ENCODE measurements at regions of chr12 and their contacts with region 1.

Region 1: GRCh38 chr12:59403259-59403932 is 192.4 kb upstream of the SLC16A7 start:
- DNase-seq: peak; percentile 30
- H3K4me3 Mint-ChIP-seq: no peak overlapping the region
- H3K27ac Mint-ChIP-seq: no peak overlapping the region
- H3K4me1 Mint-ChIP-seq: peaks cover 10% of the 10 kb centered on the region
- H3K27me3 Mint-ChIP-seq: peaks cover 2% of the 10 kb centered on the region

Region 2: GRCh38 chr12:59298296-59298695 is 105.1 kb before region 1 on chr12:
- CTCF ChIA-PET with region 1: no interaction called
- POLR2A ChIA-PET with region 1: no interaction called
- intact Hi-C with region 1: no loop called
- DNase-seq: no peak
- H3K4me3 Mint-ChIP-seq: no peak overlapping the region
- H3K27ac Mint-ChIP-seq: no peak overlapping the region
- H3K4me1 Mint-ChIP-seq: no peaks in the 10 kb centered on the region
- H3K27me3 Mint-ChIP-seq: peaks cover 4% of the 10 kb centered on the region

Region 3: DNA sequence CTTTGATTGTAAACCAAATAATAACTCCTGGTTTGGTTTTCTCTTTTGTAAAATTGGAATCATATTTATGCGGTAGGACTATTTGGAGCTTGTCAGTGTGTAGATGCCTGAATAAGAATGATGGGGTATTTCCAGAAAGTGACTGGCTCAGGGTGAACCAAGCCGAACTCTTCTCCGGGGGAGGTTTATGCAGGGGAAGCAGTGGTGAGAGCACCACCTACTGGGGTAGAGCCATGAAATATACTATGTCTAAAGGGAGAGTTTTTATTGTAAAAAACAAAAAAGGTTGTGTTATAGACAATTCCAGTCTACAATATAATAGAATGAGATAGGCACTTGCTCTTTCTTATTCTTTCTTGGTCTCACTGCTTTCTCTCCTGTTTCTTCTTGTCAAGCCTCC is 30.4 kb before region 1 on chr12:
- CTCF ChIA-PET with region 1: no interaction called
- POLR2A ChIA-PET with region 1: no interaction called
- intact Hi-C with region 1: no loop called
- DNase-seq: no peak
- H3K4me3 Mint-ChIP-seq: no peak overlapping the region
- H3K27ac Mint-ChIP-seq: no peak overlapping the region
- H3K4me1 Mint-ChIP-seq: no peaks in the 10 kb centered on the region
- H3K27me3 Mint-ChIP-seq: peaks cover 2% of the 10 kb centered on the region

Region 4: DNA sequence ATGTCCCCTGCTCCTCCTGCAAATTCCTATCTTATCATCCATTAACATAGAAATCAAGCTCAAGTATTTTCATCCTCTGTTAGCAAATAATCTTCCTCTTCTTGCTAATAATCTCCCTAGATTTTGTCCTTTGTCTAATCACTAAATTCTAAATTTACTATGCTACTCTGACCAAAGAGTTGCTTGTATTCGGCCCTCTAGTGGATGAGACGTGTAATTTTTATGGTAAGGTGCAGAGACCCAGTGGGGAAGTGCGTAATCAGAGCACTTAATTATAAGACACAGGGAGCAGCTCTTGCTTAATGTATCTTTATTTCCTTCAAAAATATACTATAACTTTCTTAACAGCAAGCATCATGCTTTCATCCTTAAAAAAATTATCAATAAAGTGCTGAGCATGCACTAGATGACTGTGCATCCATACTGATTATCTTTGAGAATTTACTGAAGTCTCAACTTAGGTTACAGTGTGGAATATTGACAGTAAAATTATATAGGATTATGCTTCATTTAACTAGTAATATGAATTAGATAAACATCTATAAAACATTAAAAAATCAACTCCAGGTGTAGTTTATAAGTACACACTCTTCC is 405.0 kb after region 1 on chr12:
- CTCF ChIA-PET with region 1: interaction called, 21 read pairs
- POLR2A ChIA-PET with region 1: no interaction called
- intact Hi-C with region 1: loop called (anchors 1 kb)
- DNase-seq: no peak
- H3K4me3 Mint-ChIP-seq: no peak overlapping the region
- H3K27ac Mint-ChIP-seq: no peak overlapping the region
- H3K4me1 Mint-ChIP-seq: no peaks in the 10 kb centered on the region
- H3K27me3 Mint-ChIP-seq: no peaks in the 10 kb centered on the region

Region 5: DNA sequence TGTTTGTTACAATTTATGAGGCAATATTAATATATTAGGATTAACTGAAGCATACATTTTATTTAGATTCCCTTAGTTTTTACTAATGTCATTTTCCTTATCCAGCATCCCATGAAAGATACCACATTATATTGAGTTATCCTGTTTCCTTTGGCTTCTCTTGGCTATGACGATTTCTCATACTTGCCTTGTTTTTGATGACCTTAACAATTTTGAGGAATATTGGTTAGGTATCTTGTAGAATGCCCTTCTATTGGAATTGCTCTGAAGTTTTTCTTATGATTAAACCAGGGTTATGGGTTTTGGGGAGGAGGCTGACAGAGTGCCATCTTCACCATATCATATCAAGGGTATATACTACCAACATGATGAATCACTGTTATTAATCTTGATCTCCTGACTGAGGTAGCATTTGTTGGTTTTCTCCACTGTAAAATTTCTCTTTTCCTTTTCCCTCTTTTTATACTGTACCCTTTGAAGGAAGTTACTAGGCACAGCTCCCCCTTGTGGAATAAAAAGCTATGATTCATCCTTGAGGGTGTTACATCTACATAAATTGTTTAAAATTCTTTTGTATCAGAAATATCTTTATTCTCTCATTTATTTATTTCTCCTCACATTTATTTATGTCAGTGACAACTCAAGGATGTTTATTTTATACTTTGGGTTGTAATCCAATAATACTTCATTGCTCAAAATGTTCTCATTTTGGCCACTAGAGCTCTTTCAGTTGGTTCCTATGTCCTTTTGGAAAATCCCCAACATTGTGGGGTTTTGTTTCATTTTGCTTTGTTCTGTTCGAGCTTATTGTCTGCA is 431.5 kb after region 1 on chr12:
- CTCF ChIA-PET with region 1: interaction called, 16 read pairs
- POLR2A ChIA-PET with region 1: no interaction called
- intact Hi-C with region 1: loop called (anchors 1 kb)
- DNase-seq: no peak
- H3K4me3 Mint-ChIP-seq: no peak overlapping the region
- H3K27ac Mint-ChIP-seq: no peak overlapping the region
- H3K4me1 Mint-ChIP-seq: no peaks in the 10 kb centered on the region
- H3K27me3 Mint-ChIP-seq: peaks cover 2% of the 10 kb centered on the region

Measured in activated CD4-positive, alpha-beta memory T cell treated with anti-CD3 and anti-CD28 coated beads for 36 hours (primary cell).